ENCODE measurements at regions of chr13 and their contacts with region 1.

Region 1: DNA sequence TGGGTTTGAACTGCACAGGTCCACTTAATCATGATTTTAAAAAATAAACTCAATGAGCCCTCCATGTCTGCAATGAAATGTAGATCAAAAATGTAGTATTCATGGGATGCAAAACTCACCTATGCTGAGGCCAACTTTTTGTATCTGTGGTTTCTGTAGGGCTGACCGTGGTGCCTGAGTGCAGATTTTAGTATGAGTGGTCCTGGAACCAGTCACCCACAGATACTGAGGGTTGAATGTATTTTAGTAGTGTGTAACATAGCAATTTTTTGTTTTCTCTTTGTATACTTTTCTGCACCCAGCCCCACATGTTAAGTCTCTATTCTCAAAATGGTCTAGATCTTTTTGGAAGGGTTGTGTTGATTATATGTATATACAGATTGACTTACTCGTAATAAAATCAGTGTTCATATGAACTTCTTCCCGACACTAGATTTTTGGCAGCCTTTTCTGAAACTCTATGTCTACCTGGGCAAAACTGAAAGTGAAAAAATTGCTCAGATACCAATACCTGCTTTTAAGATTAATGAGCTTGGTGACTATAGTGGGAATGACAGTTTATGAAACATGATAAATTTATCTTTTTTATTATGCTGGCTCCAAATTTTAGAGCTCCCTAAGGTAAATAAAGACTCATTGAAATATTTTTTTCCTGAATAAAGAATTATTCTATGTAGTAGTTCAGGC is 51.6 kb downstream of the DNAJC15 start:
- DNase-seq: peak in 2 of 14 experiments; percentile 13 to 40
- ATAC-seq: peak; percentile 44
- H3K4me3 ChIP-seq: peak overlapping the region; percentile 5
- H3K4me3 Mint-ChIP-seq: peak overlapping the region; percentile 17
- H3K27ac ChIP-seq: no peak overlapping the region
- H3K27ac Mint-ChIP-seq: peak overlapping the region; percentile 1
- H3K4me1 ChIP-seq: peaks cover 4% of the 10 kb centered on the region
- H3K4me1 Mint-ChIP-seq: peaks cover 60% of the 10 kb centered on the region
- H3K27me3 ChIP-seq: no peaks in the 10 kb centered on the region
- H3K27me3 Mint-ChIP-seq: no peaks in the 10 kb centered on the region
- CTCF ChIP-seq: no peak

Region 2: GRCh38 chr13:43044720-43045301 is 30.2 kb before region 1 on chr13:
- CTCF ChIA-PET with region 1: no interaction called
- POLR2A ChIA-PET with region 1: no interaction called
- intact Hi-C with region 1: no loop called
- DNase-seq: no peak
- ATAC-seq: no peak
- H3K4me3 ChIP-seq: no peak overlapping the region
- H3K4me3 Mint-ChIP-seq: peak overlapping the region; percentile 46
- H3K27ac ChIP-seq: peak overlapping the region in 1 of 2 donors; percentile 19
- H3K27ac Mint-ChIP-seq: peak overlapping the region; percentile 94
- H3K4me1 ChIP-seq: peaks cover 9% of the 10 kb centered on the region
- H3K4me1 Mint-ChIP-seq: peaks cover 89% of the 10 kb centered on the region
- H3K27me3 ChIP-seq: no peaks in the 10 kb centered on the region
- H3K27me3 Mint-ChIP-seq: no peaks in the 10 kb centered on the region
- CTCF ChIP-seq: no peak

Region 3: GRCh38 chr13:43878892-43879754 is 804.2 kb after region 1 on chr13 and contains the start of gene CCDC122:
- CTCF ChIA-PET with region 1: no interaction called
- POLR2A ChIA-PET with region 1: no interaction called
- intact Hi-C with region 1: loop called in 1 of 2 experiments (anchors 10 kb)
- DNase-seq: peak; percentile 31 to 91 (median 59)
- ATAC-seq: peak; percentile 90
- H3K4me3 ChIP-seq: peak within 1 kb of the TSS; percentile 76
- H3K4me3 Mint-ChIP-seq: peak within 1 kb of the TSS; percentile 91
- H3K27ac ChIP-seq: peak within 1 kb of the TSS; percentile 46 to 58
- H3K27ac Mint-ChIP-seq: peak within 1 kb of the TSS; percentile 79
- H3K4me1 ChIP-seq: peaks cover 16% of the 10 kb centered on the region
- H3K4me1 Mint-ChIP-seq: peaks cover 16% of the 10 kb centered on the region
- H3K27me3 ChIP-seq: no peaks in the 10 kb centered on the region
- H3K27me3 Mint-ChIP-seq: peaks cover 11% of the 10 kb centered on the region
- CTCF ChIP-seq: no peak
- total RNA-seq, gene CCDC122: 0.52 to 0.64 TPM

Measured in CD4-positive, alpha-beta T cell (primary cell).